T-cell (primary cell): ENCODE measurements at regions of chrX and their contacts with region 1.

Region 1: GRCh38 chrX:33149580-33149979 is 61.8 kb downstream of the DMD start:
- DNase-seq: no peak
- ATAC-seq: no peak
- H3K4me3 ChIP-seq: no peak overlapping the region
- H3K4me3 Mint-ChIP-seq: no peak overlapping the region
- H3K27ac ChIP-seq: no peak overlapping the region
- H3K27ac Mint-ChIP-seq: no peak overlapping the region
- H3K4me1 ChIP-seq: no peaks in the 10 kb centered on the region
- H3K4me1 Mint-ChIP-seq: no peaks in the 10 kb centered on the region
- H3K27me3 ChIP-seq: no peaks in the 10 kb centered on the region
- H3K27me3 Mint-ChIP-seq: no peaks in the 10 kb centered on the region

Region 2: DNA sequence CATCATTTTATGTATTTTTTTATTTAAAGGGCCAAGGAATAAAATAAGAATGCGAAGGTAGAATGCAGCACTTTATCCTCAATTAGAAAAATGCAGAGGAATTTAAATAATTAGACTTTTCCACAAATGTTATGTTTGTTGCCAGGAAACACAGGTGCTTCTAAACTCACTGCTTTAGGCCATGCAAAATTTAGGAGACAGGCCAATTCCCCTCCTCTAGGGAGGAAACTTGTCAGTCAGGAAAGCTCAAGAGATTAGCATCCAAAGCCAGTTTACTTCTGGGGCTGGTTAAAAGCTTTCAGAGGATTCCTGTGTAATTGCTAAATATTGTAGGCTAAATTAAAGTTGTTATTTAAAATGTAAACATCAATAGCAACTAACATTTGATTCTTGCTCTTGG is 62.7 kb before region 1 on chrX:
- CTCF ChIA-PET with region 1: interaction called in 1 of 2 experiments, 10 read pairs
- POLR2A ChIA-PET with region 1: no interaction called
- DNase-seq: no peak
- ATAC-seq: no peak
- H3K4me3 ChIP-seq: no peak overlapping the region
- H3K4me3 Mint-ChIP-seq: no peak overlapping the region
- H3K27ac ChIP-seq: no peak overlapping the region
- H3K27ac Mint-ChIP-seq: no peak overlapping the region
- H3K4me1 ChIP-seq: no peaks in the 10 kb centered on the region
- H3K4me1 Mint-ChIP-seq: no peaks in the 10 kb centered on the region
- H3K27me3 ChIP-seq: no peaks in the 10 kb centered on the region
- H3K27me3 Mint-ChIP-seq: no peaks in the 10 kb centered on the region